ENCODE measurements at regions of chr1 and their contacts with region 1.

Region 1: GRCh38 chr1:178749581-178750166 is 24.6 kb downstream of the RALGPS2 start:
- DNase-seq: no peak
- H3K4me3 ChIP-seq: no peak overlapping the region
- H3K27ac ChIP-seq: no peak overlapping the region
- H3K4me1 ChIP-seq: no peaks in the 10 kb centered on the region; a peak in 1 of 7 replicates
- H3K27me3 ChIP-seq: no peaks in the 10 kb centered on the region
- CTCF ChIP-seq: no peak
- EP300 ChIP-seq: no peak
- POLR2A ChIP-seq: no peak
- RAD21 ChIP-seq: no peak

Region 2: GRCh38 chr1:178532392-178532791 is 217.3 kb before region 1 on chr1:
- CTCF ChIA-PET with region 1: interaction called, 11 read pairs
- POLR2A ChIA-PET with region 1: no interaction called
- DNase-seq: peak; percentile 54 to 94
- H3K4me3 ChIP-seq: no peak overlapping the region; a peak in 1 of 8 replicates
- H3K27ac ChIP-seq: no peak overlapping the region
- H3K4me1 ChIP-seq: peaks cover 0 to 2% (median under 1%) of the 10 kb centered on the region in 4 experiments; a peak in 1 of 7 replicates
- H3K27me3 ChIP-seq: no peaks in the 10 kb centered on the region; a peak in 1 of 7 replicates
- CTCF ChIP-seq: peak; percentile 89 to 96 (median 94)
- EP300 ChIP-seq: no peak
- POLR2A ChIP-seq: no peak
- RAD21 ChIP-seq: peak; percentile 96 to 97

Region 3: DNA sequence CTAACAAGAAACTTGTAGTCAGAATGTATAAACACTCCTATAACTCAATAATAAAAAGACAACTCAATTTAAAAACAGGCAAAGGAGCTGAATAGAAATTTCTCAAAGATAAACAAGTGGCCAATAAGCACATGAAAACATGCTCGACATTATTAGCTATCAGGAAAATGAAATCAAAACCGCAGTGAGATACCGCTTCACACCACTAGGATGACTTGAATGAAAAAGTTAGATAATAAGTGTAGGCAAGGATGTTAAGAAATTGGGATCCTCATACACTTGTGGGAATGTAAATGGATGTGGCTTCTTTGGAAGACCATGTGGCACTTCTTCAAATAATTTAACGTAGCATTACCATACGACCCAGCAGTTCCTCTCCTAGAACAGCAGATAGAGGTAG is 15.7 kb before region 1 on chr1:
- CTCF ChIA-PET with region 1: interaction called, 13 read pairs
- POLR2A ChIA-PET with region 1: interaction called, 3 read pairs
- DNase-seq: no peak
- H3K4me3 ChIP-seq: no peak overlapping the region
- H3K27ac ChIP-seq: no peak overlapping the region
- H3K4me1 ChIP-seq: no peaks in the 10 kb centered on the region
- H3K27me3 ChIP-seq: no peaks in the 10 kb centered on the region
- CTCF ChIP-seq: peak in 1 of 3 experiments; percentile 51; a peak in 1 of 4 replicates
- EP300 ChIP-seq: no peak
- POLR2A ChIP-seq: no peak
- RAD21 ChIP-seq: no peak

Region 4: DNA sequence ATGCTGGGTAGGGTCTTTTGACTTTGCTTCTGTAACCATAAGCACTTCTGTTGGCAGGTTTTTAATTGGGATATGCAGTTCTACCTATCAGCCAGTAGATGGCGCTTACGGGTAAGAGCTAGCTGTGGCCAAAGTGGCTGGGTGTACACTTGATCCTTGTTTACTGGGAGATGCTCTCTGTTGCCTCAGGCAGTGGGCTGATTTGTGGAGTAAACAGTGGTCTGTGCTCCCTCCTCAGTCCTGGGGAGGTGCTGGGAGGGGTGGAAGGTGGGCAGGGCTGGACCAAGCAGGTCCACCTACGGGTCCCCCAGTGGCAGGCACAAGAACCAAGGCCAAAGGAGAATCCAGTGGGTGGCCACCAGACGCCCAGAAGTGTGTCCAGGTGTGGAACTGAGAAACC is 18.7 kb after region 1 on chr1:
- CTCF ChIA-PET with region 1: interaction called, 11 read pairs
- POLR2A ChIA-PET with region 1: no interaction called
- DNase-seq: peak in 1 of 2 experiments; percentile 50
- H3K4me3 ChIP-seq: no peak overlapping the region
- H3K27ac ChIP-seq: no peak overlapping the region
- H3K4me1 ChIP-seq: peaks cover 0 to 4% (median 0%) of the 10 kb centered on the region in 4 experiments; a peak in 1 of 7 replicates
- H3K27me3 ChIP-seq: no peaks in the 10 kb centered on the region
- CTCF ChIP-seq: peak; percentile 38 to 89 (median 83)
- EP300 ChIP-seq: no peak
- POLR2A ChIP-seq: no peak
- RAD21 ChIP-seq: peak; percentile 70 to 83

Region 5: DNA sequence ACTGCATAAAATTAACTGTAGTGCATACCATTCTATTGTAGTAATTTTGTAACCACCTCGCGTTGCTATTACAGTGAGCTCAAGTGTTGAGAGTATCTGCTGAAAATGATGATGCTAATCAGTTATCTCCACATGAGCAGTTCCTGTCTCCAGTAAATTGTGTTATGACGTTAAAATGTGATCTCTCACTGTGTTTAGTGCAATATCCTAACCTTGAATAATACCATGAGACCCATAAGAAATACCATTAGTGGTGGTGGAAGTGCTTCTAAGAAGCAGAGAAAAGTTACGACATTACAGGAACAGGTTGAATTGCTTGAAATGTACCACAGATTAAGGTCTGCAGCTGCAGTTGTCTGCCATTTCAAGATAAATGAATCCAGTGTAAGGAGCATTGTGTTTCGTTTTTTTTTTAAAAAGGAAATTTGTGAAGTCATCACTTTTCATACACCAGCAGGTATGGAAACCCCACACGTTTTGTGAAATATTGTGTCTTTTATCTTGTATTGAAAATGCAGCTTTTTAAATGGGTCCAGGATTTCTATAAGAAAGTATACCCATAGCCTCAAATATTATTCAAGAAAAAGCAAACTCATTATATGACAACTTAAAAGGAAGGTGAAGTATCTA is 48.7 kb after region 1 on chr1:
- CTCF ChIA-PET with region 1: no interaction called
- POLR2A ChIA-PET with region 1: no interaction called
- DNase-seq: no peak
- H3K4me3 ChIP-seq: no peak overlapping the region
- H3K27ac ChIP-seq: no peak overlapping the region
- H3K4me1 ChIP-seq: no peaks in the 10 kb centered on the region
- H3K27me3 ChIP-seq: no peaks in the 10 kb centered on the region
- CTCF ChIP-seq: no peak
- EP300 ChIP-seq: no peak
- POLR2A ChIP-seq: no peak
- RAD21 ChIP-seq: no peak

Region 6: GRCh38 chr1:178899402-178899801 is 149.7 kb after region 1 on chr1:
- CTCF ChIA-PET with region 1: no interaction called
- POLR2A ChIA-PET with region 1: no interaction called
- DNase-seq: no peak
- H3K4me3 ChIP-seq: no peak overlapping the region
- H3K27ac ChIP-seq: no peak overlapping the region
- H3K4me1 ChIP-seq: no peaks in the 10 kb centered on the region
- H3K27me3 ChIP-seq: no peaks in the 10 kb centered on the region
- CTCF ChIP-seq: no peak
- EP300 ChIP-seq: no peak
- POLR2A ChIP-seq: no peak
- RAD21 ChIP-seq: no peak